Head of caudate nucleus (tissue), 42 donors: ENCODE measurements at regions of chr22 and their contacts with region 1.

Region 1: GRCh38 chr22:22348127-22348814 is 103.7 kb downstream of the VPREB1 start:
- DNase-seq: peak in 41 of 42 donors; percentile 12 to 87 (median 66)

Region 2: GRCh38 chr22:22397875-22398524 is 49.7 kb after region 1 on chr22:
- intact Hi-C with region 1: loop called (anchors 1 kb)
- DNase-seq: peak in 1 of 42 donors; percentile 13